GM12878 (cell line): ENCODE measurements at regions of chr13 and their contacts with region 1.

Region 1: DNA sequence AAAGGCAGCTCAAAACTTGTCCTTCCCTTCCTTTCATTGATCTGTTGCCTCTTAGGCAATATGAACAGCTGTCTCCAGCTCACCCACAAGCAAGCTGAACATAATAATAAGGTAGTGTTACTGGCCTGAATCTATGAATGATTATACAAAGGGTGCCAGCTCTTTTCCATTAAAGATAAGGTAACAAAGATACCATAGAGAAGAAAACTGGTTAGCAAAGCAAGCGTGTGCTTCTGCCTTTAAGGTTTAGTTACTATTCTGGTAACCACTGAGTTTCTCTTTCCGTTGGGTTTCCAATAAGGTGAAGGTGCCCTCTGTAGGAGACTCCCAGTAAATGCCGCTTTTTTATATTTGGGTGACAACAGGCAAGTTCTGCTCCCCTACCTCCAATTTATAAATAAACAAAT is 12.1 kb upstream of the DACH1 start:
- DNase-seq: no peak
- ATAC-seq: peak; percentile 86
- H3K4me3 ChIP-seq: no peak overlapping the region
- H3K27ac ChIP-seq: no peak overlapping the region
- H3K4me1 ChIP-seq: peaks cover 7% of the 10 kb centered on the region; the same call in 1 of the 2 replicates
- H3K27me3 ChIP-seq: no peaks in the 10 kb centered on the region
- CTCF ChIP-seq: peak; percentile 47 to 68 (median 64)
- EP300 ChIP-seq: no peak
- POLR2A ChIP-seq: no peak
- RAD21 ChIP-seq: peak; percentile 77

Region 2: GRCh38 chr13:71320452-71320851 is 558.7 kb before region 1 on chr13:
- CTCF ChIA-PET with region 1: no interaction called
- POLR2A ChIA-PET with region 1: no interaction called
- RAD21 ChIA-PET with region 1: no interaction called
- SMC1A ChIA-PET with region 1: no interaction called
- in situ Hi-C with region 1: no loop called
- intact Hi-C with region 1: loop called (anchors 10 kb)
- DNase-seq: no peak
- ATAC-seq: peak; percentile 81
- H3K4me3 ChIP-seq: no peak overlapping the region
- H3K27ac ChIP-seq: no peak overlapping the region
- H3K4me1 ChIP-seq: no peaks in the 10 kb centered on the region
- H3K27me3 ChIP-seq: no peaks in the 10 kb centered on the region
- CTCF ChIP-seq: peak; percentile 55 to 64 (median 59)
- EP300 ChIP-seq: no peak
- POLR2A ChIP-seq: no peak
- RAD21 ChIP-seq: peak; percentile 74

Region 3: DNA sequence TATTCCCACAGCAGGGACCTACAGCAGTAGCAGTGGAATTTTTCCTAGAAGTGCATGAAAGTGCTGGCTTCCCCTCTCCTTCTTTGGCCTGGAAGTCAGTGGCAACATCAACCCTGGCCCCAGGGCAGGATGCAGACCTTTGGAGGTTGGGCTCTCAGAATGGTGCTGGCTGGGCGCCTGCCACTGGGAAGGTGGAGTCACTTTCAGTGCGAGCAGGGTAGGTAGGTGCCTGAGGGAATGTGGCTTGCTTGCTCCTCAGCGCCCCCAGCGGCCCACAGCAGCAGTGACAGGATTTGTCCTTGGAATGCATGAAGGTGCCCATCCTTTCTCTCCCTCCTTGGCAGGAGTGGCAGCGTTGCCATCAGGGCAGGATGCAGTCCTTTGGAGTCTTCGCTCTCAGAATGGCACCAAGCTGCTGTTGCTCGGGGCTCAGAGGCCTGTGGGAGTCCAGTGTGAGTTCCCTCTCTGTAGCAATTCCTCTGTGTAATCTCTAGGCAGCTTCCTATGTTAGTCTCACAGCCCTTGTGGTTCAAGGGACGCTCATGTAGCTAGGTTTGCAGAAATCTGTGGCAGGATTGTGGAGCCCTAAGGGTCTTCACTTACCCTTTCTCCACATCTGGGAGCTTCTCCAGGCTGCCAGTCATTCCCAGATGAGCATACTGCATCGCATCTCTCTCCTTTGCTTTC is 342.3 kb after region 1 on chr13:
- CTCF ChIA-PET with region 1: no interaction called
- POLR2A ChIA-PET with region 1: no interaction called
- RAD21 ChIA-PET with region 1: no interaction called
- SMC1A ChIA-PET with region 1: no interaction called
- in situ Hi-C with region 1: no loop called
- intact Hi-C with region 1: no loop called
- DNase-seq: no peak
- ATAC-seq: peak; percentile 84
- H3K4me3 ChIP-seq: no peak overlapping the region
- H3K27ac ChIP-seq: no peak overlapping the region
- H3K4me1 ChIP-seq: no peaks in the 10 kb centered on the region
- H3K27me3 ChIP-seq: no peaks in the 10 kb centered on the region
- CTCF ChIP-seq: peak; percentile 54 to 83 (median 58)
- EP300 ChIP-seq: no peak
- POLR2A ChIP-seq: no peak
- RAD21 ChIP-seq: peak; percentile 27; the same call in 1 of the 2 replicates